Common myeloid progenitor, CD34-positive (primary cell): ENCODE measurements at regions of chr3 and their contacts with region 1.

Region 1: GRCh38 chr3:128680602-128681368 is 30.2 kb upstream of the RPN1 start:
- DNase-seq: peak; percentile 97 to 99 (median 98)
- H3K4me3 ChIP-seq: peak overlapping the region; percentile 58 to 90 (median 69)
- H3K27ac ChIP-seq: peak overlapping the region; percentile 80 to 92
- H3K4me1 ChIP-seq: peaks cover 14 to 66% (median 42%) of the 10 kb centered on the region in 4 experiments
- H3K27me3 ChIP-seq: no peaks in the 10 kb centered on the region

Region 2: GRCh38 chr3:128655531-128655930 is 25.3 kb before region 1 on chr3:
- CTCF ChIA-PET with region 1: interaction called, 14 read pairs
- POLR2A ChIA-PET with region 1: interaction called, 4 read pairs
- DNase-seq: no peak
- H3K4me3 ChIP-seq: no peak overlapping the region
- H3K27ac ChIP-seq: no peak overlapping the region
- H3K4me1 ChIP-seq: peaks cover 3 to 22% (median 13%) of the 10 kb centered on the region in 4 experiments
- H3K27me3 ChIP-seq: no peaks in the 10 kb centered on the region

Region 3: GRCh38 chr3:128736601-128737000 is 55.8 kb after region 1 on chr3:
- CTCF ChIA-PET with region 1: interaction called, 13 read pairs
- POLR2A ChIA-PET with region 1: interaction called, 3 read pairs
- DNase-seq: no peak
- H3K4me3 ChIP-seq: no peak overlapping the region
- H3K27ac ChIP-seq: no peak overlapping the region
- H3K4me1 ChIP-seq: peaks cover 17 to 36% (median 24%) of the 10 kb centered on the region in 4 experiments
- H3K27me3 ChIP-seq: no peaks in the 10 kb centered on the region

Region 4: GRCh38 chr3:128760042-128760441 is 79.3 kb after region 1 on chr3:
- CTCF ChIA-PET with region 1: interaction called, 24 read pairs
- POLR2A ChIA-PET with region 1: no interaction called
- DNase-seq: no peak
- H3K4me3 ChIP-seq: no peak overlapping the region
- H3K27ac ChIP-seq: no peak overlapping the region
- H3K4me1 ChIP-seq: peaks cover 0 to 27% (median 6%) of the 10 kb centered on the region in 4 experiments
- H3K27me3 ChIP-seq: no peaks in the 10 kb centered on the region

Region 5: GRCh38 chr3:128794770-128795649 is 114.2 kb after region 1 on chr3:
- CTCF ChIA-PET with region 1: interaction called, 26 read pairs
- POLR2A ChIA-PET with region 1: no interaction called
- DNase-seq: peak; percentile 63 to 75 (median 72)
- H3K4me3 ChIP-seq: no peak overlapping the region
- H3K27ac ChIP-seq: no peak overlapping the region
- H3K4me1 ChIP-seq: peaks cover 11 to 45% (median 31%) of the 10 kb centered on the region in 4 experiments
- H3K27me3 ChIP-seq: no peaks in the 10 kb centered on the region

Region 6: DNA sequence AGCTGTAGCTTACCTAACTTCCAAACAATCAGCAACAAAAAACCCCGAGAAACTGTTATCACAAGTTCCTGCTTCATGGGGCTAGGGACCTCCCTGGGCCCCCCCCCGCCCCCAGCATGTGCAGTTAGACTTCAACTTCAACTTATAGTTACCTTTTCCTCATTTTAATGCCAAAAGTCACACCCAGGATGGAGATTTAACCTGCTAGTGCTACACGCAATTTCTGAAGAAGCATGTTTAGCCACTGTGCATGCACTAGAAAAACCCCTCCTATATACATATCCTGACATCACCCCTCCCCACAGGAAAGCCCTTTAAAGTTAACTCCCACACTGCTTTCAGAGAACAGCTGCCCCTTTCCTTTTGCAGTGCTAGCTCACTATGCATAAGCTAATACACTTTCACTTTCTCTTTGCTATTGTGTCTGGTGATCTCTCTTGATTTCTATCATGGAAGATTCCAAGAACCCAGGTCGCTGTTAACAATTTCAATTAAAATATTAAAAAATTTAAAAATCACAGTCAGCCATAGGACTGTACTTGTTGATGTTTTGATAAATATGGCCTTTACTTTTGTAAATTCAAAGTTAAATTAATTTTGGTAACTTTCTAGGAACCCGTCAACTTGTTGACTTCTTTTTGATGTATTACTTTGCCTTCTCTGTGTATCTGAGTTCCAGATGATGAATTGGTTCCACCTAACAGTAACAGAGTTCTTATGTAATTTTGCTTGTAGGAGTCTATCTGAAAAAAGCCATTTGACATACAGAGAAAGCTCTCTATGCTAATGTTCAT is 123.4 kb after region 1 on chr3:
- CTCF ChIA-PET with region 1: interaction called, 10 read pairs
- POLR2A ChIA-PET with region 1: no interaction called
- DNase-seq: peak; percentile 82 to 94 (median 92)
- H3K4me3 ChIP-seq: peak overlapping the region in 6 of 7 experiments; percentile 36 to 72 (median 50)
- H3K27ac ChIP-seq: peak overlapping the region; percentile 51 to 73
- H3K4me1 ChIP-seq: peaks cover 27 to 58% (median 46%) of the 10 kb centered on the region in 4 experiments
- H3K27me3 ChIP-seq: no peaks in the 10 kb centered on the region

Region 7: DNA sequence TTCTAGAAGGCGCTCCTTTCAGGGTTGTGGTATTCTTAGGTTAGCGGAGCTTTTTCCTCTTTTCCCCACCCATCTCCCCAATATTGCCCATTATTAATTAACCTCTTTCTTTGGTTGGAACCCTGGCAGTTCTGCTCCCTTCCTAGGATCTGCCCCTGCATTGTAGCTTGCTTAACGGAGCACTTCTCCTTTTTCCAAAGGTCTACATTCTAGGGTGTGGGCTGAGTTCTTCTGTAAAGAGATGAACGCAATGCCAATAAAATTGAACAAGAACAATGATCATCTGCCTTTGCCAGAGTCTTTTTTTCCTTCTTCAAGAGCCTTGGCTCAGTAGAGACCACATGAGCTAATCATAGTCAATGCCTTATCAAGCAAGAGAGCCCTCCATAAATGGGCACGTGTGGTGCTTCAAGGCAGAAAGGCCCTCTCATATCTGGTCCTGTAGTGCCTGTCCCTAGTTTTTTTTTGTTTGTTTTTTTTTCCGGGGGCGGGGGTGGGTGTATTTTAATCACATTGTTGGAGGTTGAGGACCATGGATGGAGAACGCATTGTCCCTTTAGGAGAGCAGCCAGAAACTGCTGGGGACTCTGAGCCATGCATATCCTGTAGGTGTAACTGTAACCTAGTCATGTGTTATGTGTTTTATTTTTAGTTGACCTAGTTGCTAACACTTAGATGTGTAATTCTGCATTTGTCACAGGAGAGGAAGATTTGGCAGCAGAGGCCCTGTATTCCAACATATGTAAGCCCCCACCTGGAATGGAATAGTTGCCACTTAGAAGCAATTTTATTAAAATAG is 133.9 kb after region 1 on chr3:
- CTCF ChIA-PET with region 1: interaction called, 10 read pairs
- POLR2A ChIA-PET with region 1: no interaction called
- DNase-seq: no peak
- H3K4me3 ChIP-seq: no peak overlapping the region
- H3K27ac ChIP-seq: no peak overlapping the region
- H3K4me1 ChIP-seq: peaks cover 0 to 10% (median 2%) of the 10 kb centered on the region in 4 experiments
- H3K27me3 ChIP-seq: no peaks in the 10 kb centered on the region